ENCODE measurements at regions of chr17 and their contacts with region 1.

Region 1: GRCh38 chr17:79045842-79046196 is 21.9 kb downstream of the C1QTNF1 start:
- DNase-seq: peak; percentile 93
- H3K4me3 ChIP-seq: no peak overlapping the region
- H3K27ac ChIP-seq: no peak overlapping the region
- H3K4me1 ChIP-seq: peaks cover 0 to 23% of the 10 kb centered on the region in 2 experiments; a peak in 2 of 4 replicates
- H3K27me3 ChIP-seq: no peaks in the 10 kb centered on the region
- CTCF ChIP-seq: peak; percentile 98
- EP300 ChIP-seq: no peak
- RAD21 ChIP-seq: peak; percentile 92

Region 2: GRCh38 chr17:78979780-78980623 is 65.8 kb before region 1 on chr17 and contains the start of gene LGALS3BP:
- CTCF ChIA-PET with region 1: interaction called, 13 read pairs
- POLR2A ChIA-PET with region 1: no interaction called
- DNase-seq: peak; percentile 97
- H3K4me3 ChIP-seq: peak within 1 kb of the TSS; percentile 44 to 68
- H3K27ac ChIP-seq: peak within 1 kb of the TSS; percentile 56 to 98
- H3K4me1 ChIP-seq: peaks cover 20 to 55% of the 10 kb centered on the region in 2 experiments; a peak in 3 of 4 replicates
- H3K27me3 ChIP-seq: no peaks in the 10 kb centered on the region
- CTCF ChIP-seq: no peak
- EP300 ChIP-seq: peak in 1 of 2 experiments; percentile 87; a peak in 2 of 4 replicates
- RAD21 ChIP-seq: peak; percentile 22
- polyA plus RNA-seq, gene LGALS3BP: 272 and 579 TPM in 2 replicates

Region 3: GRCh38 chr17:79003661-79004411 is 42.0 kb before region 1 on chr17:
- CTCF ChIA-PET with region 1: interaction called, 36 read pairs
- POLR2A ChIA-PET with region 1: interaction called, 6 read pairs
- DNase-seq: no peak
- H3K4me3 ChIP-seq: no peak overlapping the region
- H3K27ac ChIP-seq: no peak overlapping the region
- H3K4me1 ChIP-seq: peaks cover 8 to 44% of the 10 kb centered on the region in 2 experiments; a peak in 2 of 4 replicates
- H3K27me3 ChIP-seq: no peaks in the 10 kb centered on the region
- CTCF ChIP-seq: no peak
- EP300 ChIP-seq: no peak
- RAD21 ChIP-seq: no peak

Region 4: GRCh38 chr17:79027925-79028813 is 17.6 kb before region 1 on chr17:
- CTCF ChIA-PET with region 1: interaction called, 405 read pairs
- POLR2A ChIA-PET with region 1: interaction called, 11 read pairs
- DNase-seq: peak; percentile 92
- H3K4me3 ChIP-seq: peak overlapping the region in 1 of 2 experiments; percentile 19; a peak in 1 of 4 replicates
- H3K27ac ChIP-seq: peak overlapping the region; percentile 51 to 92; a peak in 3 of 4 replicates
- H3K4me1 ChIP-seq: peaks cover 33 to 59% of the 10 kb centered on the region in 2 experiments
- H3K27me3 ChIP-seq: no peaks in the 10 kb centered on the region
- CTCF ChIP-seq: peak; percentile 56
- EP300 ChIP-seq: peak; percentile 32 to 88; a peak in 3 of 4 replicates
- RAD21 ChIP-seq: peak; percentile 28

Region 5: DNA sequence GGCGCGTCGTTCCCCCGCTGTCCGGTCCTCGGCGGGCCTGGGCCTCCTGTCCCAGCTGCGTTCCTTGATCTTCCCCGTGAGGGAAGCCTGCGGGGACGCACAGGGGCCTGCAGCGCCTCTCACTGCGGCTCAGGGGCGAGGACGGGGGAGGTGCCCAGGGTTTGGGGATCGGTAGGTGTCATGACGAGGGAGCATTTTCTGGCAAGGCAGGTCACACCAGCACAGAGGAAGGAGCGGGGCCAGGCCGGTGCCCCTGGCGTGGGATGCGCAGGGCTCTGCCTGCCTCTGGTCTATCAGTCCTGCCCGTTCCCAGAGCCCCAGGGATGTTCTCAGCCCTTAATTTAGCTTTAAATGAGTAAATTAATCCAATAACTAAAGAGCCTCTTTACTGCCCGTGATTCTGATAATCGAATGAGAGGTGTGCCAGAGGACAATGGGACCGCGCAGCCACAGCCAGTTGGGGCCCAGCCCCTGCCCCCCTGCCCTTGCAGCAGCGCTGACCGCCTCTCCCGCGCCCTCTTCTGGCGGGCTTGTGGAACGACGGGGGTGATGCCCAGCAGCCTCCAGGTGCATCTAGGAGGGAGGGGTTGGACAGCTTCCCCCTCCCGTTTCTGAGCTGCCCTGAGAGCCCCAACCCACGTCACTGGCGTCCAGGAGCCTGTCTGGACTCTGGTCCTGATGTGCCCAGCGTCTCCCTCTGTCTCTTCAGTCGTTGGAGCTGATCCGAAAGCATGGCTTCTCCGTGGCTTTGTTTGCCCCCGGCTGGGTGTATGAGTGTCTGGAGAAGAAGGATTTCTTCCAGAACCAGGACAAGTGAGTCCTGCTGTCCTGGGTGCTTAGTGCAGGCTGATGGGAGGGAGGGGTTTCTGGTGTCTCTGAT is 36.7 kb after region 1 on chr17:
- CTCF ChIA-PET with region 1: interaction called, 529 read pairs
- POLR2A ChIA-PET with region 1: no interaction called
- DNase-seq: peak; percentile 96
- H3K4me3 ChIP-seq: no peak overlapping the region; a peak in 1 of 4 replicates
- H3K27ac ChIP-seq: no peak overlapping the region; a peak in 1 of 4 replicates
- H3K4me1 ChIP-seq: peaks cover 0 to 13% of the 10 kb centered on the region in 2 experiments; a peak in 1 of 4 replicates
- H3K27me3 ChIP-seq: no peaks in the 10 kb centered on the region
- CTCF ChIP-seq: peak; percentile 98
- EP300 ChIP-seq: no peak
- RAD21 ChIP-seq: peak; percentile 78

Region 6: GRCh38 chr17:79126139-79126538 is 80.3 kb after region 1 on chr17:
- CTCF ChIA-PET with region 1: interaction called, 11 read pairs
- POLR2A ChIA-PET with region 1: no interaction called
- DNase-seq: peak; percentile 87
- H3K4me3 ChIP-seq: no peak overlapping the region
- H3K27ac ChIP-seq: no peak overlapping the region
- H3K4me1 ChIP-seq: peaks cover 0 to 17% of the 10 kb centered on the region in 2 experiments; a peak in 1 of 4 replicates
- H3K27me3 ChIP-seq: peaks cover 68% of the 10 kb centered on the region
- CTCF ChIP-seq: peak; percentile 31
- EP300 ChIP-seq: no peak
- RAD21 ChIP-seq: peak; percentile 65

Region 7: DNA sequence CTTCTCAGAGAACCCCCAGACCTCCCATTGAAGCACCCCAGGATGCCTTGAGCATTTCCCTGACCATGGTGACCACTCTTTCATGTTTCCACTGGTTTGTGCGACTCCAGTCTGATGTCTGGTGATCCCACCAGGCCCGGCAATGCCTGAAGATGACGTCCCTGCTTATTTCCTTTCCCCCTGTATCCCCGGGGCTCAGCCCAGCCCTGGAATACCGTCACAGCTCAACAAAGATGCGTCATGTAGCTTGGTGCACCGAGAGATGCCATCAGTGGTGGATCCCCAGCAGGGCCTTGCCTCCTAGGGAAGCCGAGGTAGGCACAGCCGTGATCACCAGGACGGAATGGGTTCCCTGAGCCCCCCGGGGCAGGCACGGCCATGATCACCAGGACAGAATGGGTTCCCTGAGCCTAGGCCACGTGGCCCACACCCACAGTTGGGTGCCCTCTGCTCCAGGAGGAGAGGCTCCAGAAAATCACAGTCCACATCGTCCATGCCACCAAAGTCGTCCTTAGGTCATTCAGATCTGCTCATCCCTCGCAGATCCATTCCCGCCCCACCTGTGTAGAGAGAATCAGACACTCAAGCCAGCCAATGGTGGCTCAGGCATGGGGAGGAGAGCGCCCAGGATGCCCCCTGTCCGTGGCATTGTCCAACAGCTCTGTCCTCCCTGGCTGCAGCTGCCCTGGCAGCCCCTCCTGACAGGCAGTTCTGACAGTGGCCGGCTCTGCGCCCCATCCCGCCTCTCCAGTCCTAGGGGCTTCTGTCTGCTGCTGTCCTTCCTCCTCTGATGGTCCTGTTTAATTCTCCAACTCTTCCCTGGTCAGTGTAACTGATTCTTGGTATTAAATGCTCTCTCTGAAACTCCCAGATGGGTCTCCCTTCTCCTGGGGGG is 303.9 kb after region 1 on chr17:
- CTCF ChIA-PET with region 1: no interaction called
- POLR2A ChIA-PET with region 1: no interaction called
- DNase-seq: no peak
- H3K4me3 ChIP-seq: no peak overlapping the region
- H3K27ac ChIP-seq: no peak overlapping the region
- H3K4me1 ChIP-seq: no peaks in the 10 kb centered on the region
- H3K27me3 ChIP-seq: peaks cover 26% of the 10 kb centered on the region
- CTCF ChIP-seq: no peak
- EP300 ChIP-seq: no peak
- RAD21 ChIP-seq: no peak

Region 8: GRCh38 chr17:79382322-79382721 is 336.5 kb after region 1 on chr17:
- CTCF ChIA-PET with region 1: interaction called, 221 read pairs
- POLR2A ChIA-PET with region 1: no interaction called
- DNase-seq: no peak
- H3K4me3 ChIP-seq: no peak overlapping the region
- H3K27ac ChIP-seq: no peak overlapping the region
- H3K4me1 ChIP-seq: no peaks in the 10 kb centered on the region
- H3K27me3 ChIP-seq: peaks cover 15% of the 10 kb centered on the region; the same call in 1 of the 2 replicates
- CTCF ChIP-seq: no peak
- EP300 ChIP-seq: no peak
- RAD21 ChIP-seq: no peak